ENCODE measurements at regions of chr5 and their contacts with region 1.

Region 1: DNA sequence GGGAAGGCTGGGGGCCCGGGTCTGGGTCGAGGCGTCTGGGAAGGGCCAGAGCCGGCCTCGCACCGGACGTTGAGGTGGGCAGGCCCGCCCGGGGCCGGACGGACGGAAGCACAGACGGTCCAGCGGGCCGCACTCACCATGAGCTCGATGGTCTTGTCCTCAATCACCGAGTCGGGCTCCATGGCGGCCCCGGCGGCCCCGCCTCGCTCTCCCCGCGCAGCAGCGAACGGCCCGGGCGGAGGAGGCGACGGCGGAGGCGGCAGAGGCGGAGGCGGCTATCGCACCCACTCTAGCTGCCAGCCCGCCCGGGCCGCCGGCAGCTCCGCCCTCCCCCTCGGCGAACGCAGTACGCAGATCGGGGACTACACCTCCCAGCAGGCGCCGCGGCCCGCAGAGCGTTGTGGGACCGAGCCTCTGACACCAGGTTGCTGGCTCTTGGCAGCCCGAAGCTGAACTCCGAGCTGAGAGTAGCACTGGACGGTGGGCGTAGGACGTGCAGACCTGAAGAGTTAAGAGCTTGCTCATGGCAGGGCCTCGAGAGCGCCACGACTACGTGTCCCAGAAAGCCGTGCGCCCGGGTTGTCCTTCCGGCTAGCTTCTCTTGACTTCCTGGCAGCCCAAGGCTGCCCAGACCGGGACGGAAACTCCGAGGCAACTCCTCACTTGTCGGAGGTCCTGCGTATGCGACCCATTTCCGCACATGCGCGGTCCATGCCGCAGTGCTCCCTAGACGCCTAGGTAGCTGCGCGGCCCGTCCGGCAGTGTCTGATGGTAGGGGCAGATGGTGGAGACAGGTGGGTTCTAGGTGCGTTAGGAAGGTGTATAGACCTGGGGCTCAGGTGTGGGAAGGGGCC is at the start of gene FBXW11:
- DNase-seq: peak; percentile 98
- H3K4me3 Mint-ChIP-seq: peak within 1 kb of the TSS; percentile 99
- H3K27ac Mint-ChIP-seq: peak within 1 kb of the TSS; percentile 99
- H3K4me1 Mint-ChIP-seq: peaks cover 46% of the 10 kb centered on the region
- H3K27me3 Mint-ChIP-seq: no peaks in the 10 kb centered on the region
- total RNA-seq, gene FBXW11: 53.3 and 54.4 TPM in 2 replicates

Region 2: GRCh38 chr5:171387345-171387969 is 619.1 kb before region 1 on chr5 and contains the start of gene NPM1:
- intact Hi-C with region 1: loop called (anchors 1 kb)
- DNase-seq: peak; percentile 99
- H3K4me3 Mint-ChIP-seq: peak within 1 kb of the TSS; percentile 94
- H3K27ac Mint-ChIP-seq: peak within 1 kb of the TSS; percentile 100
- H3K4me1 Mint-ChIP-seq: peaks cover 41% of the 10 kb centered on the region
- H3K27me3 Mint-ChIP-seq: peaks cover 10% of the 10 kb centered on the region
- total RNA-seq, gene NPM1: 3,066 and 3,162 TPM in 2 replicates

Region 3: DNA sequence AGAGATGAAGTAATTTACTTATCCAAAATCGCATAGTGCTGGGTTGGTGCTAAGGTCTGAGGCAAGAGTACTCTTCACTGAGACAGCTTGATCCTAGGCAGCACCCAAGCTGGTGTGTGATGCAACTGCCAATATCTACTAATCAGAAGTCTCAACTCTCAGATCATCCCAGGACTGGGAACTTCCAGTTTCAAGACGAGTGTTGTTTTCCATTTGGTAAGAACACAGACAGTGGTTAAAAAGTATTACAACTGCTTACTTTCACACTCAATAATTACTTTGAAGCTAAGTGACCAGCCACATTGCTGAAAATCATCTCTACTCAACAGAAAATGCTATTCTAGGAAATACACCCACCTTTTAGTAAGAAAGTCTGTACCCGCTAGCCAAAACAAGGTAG is 45.4 kb before region 1 on chr5:
- intact Hi-C with region 1: loop called (anchors 1 kb)
- DNase-seq: peak; percentile 67
- H3K4me3 Mint-ChIP-seq: peak overlapping the region; percentile 21
- H3K27ac Mint-ChIP-seq: peak overlapping the region; percentile 70
- H3K4me1 Mint-ChIP-seq: peaks cover 57% of the 10 kb centered on the region
- H3K27me3 Mint-ChIP-seq: no peaks in the 10 kb centered on the region

Region 4: DNA sequence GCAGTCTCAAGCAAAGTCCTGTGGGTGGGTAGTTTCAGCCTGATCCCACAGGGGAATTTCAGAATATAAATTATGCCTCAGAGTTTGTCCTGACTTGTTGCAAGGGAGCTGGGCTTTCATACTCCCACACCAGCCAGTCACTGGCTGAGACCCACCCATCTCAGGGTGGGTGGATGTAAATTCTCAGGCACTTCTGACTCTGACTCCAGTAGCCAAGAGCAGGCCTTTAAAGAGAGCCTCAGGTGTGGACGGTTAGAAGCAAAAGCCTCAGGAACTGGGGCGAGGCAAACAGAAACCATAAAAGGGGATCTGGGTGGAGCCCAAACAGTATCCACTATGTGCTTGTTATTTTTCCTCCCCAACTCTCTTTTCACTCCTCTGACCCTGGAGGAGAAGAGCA is 28.5 kb after region 1 on chr5:
- intact Hi-C with region 1: loop called (anchors 2 kb)
- DNase-seq: no peak
- H3K4me3 Mint-ChIP-seq: peak overlapping the region; percentile 31
- H3K27ac Mint-ChIP-seq: peak overlapping the region; percentile 39
- H3K4me1 Mint-ChIP-seq: peaks cover 12% of the 10 kb centered on the region
- H3K27me3 Mint-ChIP-seq: no peaks in the 10 kb centered on the region

Region 5: DNA sequence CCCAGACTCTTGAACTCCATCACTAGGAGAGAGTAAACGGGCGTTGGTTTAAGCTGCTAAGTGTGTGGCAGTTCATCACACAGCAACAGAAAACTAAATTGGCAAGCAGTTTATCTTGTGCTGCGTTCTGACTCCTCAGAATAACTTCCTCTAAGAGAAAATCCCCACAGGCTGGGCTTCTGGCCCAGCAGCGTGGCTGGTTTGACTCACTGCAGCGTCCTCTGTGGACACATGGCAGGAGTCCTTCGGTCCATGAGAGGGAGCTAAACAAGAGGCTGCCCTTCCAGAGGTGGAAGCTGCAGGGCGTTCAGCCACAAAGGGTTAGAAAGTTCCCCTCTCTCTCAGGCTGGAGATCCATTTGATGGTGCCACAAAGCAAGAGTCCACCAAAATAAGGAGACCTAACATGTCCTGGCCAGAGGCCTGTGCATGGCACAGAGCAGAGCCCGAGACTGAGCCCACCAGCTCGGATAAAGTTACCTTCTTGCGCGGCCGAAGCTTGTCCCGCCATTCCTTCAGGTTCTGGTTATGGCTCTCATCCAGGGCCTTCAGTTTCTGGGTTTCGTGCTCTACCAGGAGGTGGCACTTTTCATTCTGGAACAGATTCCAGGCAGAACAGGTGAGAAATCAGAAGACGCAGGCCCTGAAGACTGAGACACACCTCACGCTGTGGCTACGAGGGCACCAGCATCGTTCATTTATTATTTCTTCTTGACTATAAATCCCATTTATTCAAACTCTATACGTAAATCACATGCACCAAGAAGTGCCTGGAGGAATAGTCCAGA is 46.1 kb after region 1 on chr5:
- intact Hi-C with region 1: no loop called
- DNase-seq: no peak
- H3K4me3 Mint-ChIP-seq: no peak overlapping the region
- H3K27ac Mint-ChIP-seq: no peak overlapping the region
- H3K4me1 Mint-ChIP-seq: peaks cover 6% of the 10 kb centered on the region
- H3K27me3 Mint-ChIP-seq: no peaks in the 10 kb centered on the region

Region 6: GRCh38 chr5:172179361-172179989 is 172.9 kb after region 1 on chr5:
- intact Hi-C with region 1: loop called (anchors 2 kb)
- DNase-seq: peak; percentile 88
- H3K4me3 Mint-ChIP-seq: peak overlapping the region; percentile 90
- H3K27ac Mint-ChIP-seq: peak overlapping the region; percentile 96
- H3K4me1 Mint-ChIP-seq: peaks cover 78% of the 10 kb centered on the region
- H3K27me3 Mint-ChIP-seq: no peaks in the 10 kb centered on the region